AG04450 (cell line): ENCODE measurements at regions of chr1 and their contacts with region 1.

Region 1: GRCh38 chr1:42105025-42105424 is 48.2 kb upstream of the GUCA2B start:
- DNase-seq: no peak
- H3K4me3 ChIP-seq: no peak overlapping the region
- H3K27ac ChIP-seq: no peak overlapping the region
- H3K27me3 ChIP-seq: peaks cover 7% of the 10 kb centered on the region
- CTCF ChIP-seq: no peak

Region 2: GRCh38 chr1:42290130-42290529 is 185.1 kb after region 1 on chr1:
- CTCF ChIA-PET with region 1: interaction called, 13 read pairs
- POLR2A ChIA-PET with region 1: no interaction called
- DNase-seq: no peak
- H3K4me3 ChIP-seq: no peak overlapping the region
- H3K27ac ChIP-seq: no peak overlapping the region
- H3K27me3 ChIP-seq: no peaks in the 10 kb centered on the region
- CTCF ChIP-seq: no peak